ENCODE measurements at regions of chr11 and their contacts with region 1.

Region 1: GRCh38 chr11:44911029-44911814 is 39.5 kb downstream of the TP53I11 start:
- DNase-seq: peak; percentile 84
- H3K4me3 Mint-ChIP-seq: no peak overlapping the region
- H3K27ac Mint-ChIP-seq: no peak overlapping the region
- H3K4me1 Mint-ChIP-seq: peaks cover 4% of the 10 kb centered on the region
- H3K27me3 Mint-ChIP-seq: no peaks in the 10 kb centered on the region

Region 2: DNA sequence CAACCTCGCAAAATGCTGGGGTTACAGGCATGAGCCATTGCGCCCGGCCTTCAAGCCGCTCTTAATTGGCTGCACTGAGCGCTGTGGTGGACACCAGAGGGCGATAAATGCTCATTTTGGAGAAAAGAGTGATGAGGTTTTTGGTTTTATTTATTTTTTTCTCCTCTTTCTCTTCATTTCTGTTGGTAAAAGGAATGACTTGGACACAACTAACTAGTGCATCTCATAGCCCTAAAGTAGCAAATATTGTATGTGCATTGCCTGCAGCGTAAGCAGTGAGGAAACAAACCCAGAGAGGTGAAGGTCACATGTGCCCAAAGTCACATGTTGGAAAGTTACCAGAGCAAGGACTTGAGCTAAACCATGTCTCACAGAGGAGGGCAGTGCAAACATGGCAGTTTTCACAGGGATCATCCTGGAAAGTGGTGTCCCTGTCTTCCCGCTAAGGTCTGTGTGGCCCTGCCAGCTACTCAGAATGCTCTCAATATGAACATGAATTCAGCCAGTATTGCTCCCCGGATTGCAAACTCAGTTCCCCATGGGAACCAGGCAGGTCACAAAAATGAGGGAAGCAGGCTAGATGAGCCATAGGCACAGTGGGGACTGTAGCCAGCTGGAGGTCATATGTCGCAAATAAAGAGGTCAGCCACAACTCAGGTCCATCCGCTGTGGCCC is 354.4 kb before region 1 on chr11:
- CTCF ChIA-PET with region 1: interaction called, 15 read pairs
- POLR2A ChIA-PET with region 1: no interaction called
- DNase-seq: peak; percentile 74
- H3K4me3 Mint-ChIP-seq: no peak overlapping the region
- H3K27ac Mint-ChIP-seq: peak overlapping the region; percentile 31
- H3K4me1 Mint-ChIP-seq: peaks cover 34% of the 10 kb centered on the region
- H3K27me3 Mint-ChIP-seq: peaks cover 4% of the 10 kb centered on the region

Region 3: GRCh38 chr11:44658506-44658850 is 252.7 kb before region 1 on chr11:
- CTCF ChIA-PET with region 1: interaction called, 11 read pairs
- POLR2A ChIA-PET with region 1: no interaction called
- DNase-seq: peak; percentile 59
- H3K4me3 Mint-ChIP-seq: no peak overlapping the region
- H3K27ac Mint-ChIP-seq: peak overlapping the region; percentile 45
- H3K4me1 Mint-ChIP-seq: peaks cover 33% of the 10 kb centered on the region
- H3K27me3 Mint-ChIP-seq: peaks cover 11% of the 10 kb centered on the region

Region 4: DNA sequence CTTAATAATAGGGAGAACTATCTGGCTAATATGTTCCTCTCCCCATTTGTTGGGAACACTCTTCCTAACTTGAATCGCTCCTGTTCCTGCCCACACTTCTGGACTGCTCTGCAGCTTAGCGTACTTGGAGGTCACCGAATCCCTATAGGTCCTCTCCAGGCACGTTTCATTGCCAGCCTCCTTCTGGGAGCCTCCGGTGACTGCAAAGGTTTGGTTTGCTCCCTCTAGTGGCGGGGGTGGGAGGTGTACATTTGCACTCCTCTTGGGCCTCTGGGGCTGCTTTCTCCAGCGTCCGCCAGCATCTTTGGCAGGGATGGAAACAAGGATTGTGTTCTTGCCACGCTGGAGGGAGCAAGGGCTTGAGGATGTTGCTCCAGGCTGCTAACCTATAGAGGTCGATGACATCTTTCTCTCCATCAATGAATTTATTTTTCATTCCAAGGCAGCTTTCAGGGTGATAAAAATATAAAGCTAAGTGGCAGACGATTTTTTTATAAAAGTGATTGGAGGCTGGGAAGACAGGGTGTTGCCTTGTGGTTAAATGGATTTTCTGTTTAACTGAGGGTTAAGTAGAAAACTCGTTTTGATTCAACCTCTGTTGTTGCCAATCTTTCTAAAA is 135.7 kb before region 1 on chr11:
- CTCF ChIA-PET with region 1: interaction called, 16 read pairs
- POLR2A ChIA-PET with region 1: no interaction called
- DNase-seq: peak; percentile 61
- H3K4me3 Mint-ChIP-seq: no peak overlapping the region
- H3K27ac Mint-ChIP-seq: no peak overlapping the region
- H3K4me1 Mint-ChIP-seq: no peaks in the 10 kb centered on the region
- H3K27me3 Mint-ChIP-seq: peaks cover 2% of the 10 kb centered on the region

Region 5: GRCh38 chr11:44901120-44901633 is 10.0 kb before region 1 on chr11:
- CTCF ChIA-PET with region 1: interaction called, 14 read pairs
- POLR2A ChIA-PET with region 1: interaction called, 3 read pairs
- DNase-seq: no peak
- H3K4me3 Mint-ChIP-seq: no peak overlapping the region
- H3K27ac Mint-ChIP-seq: no peak overlapping the region
- H3K4me1 Mint-ChIP-seq: no peaks in the 10 kb centered on the region
- H3K27me3 Mint-ChIP-seq: no peaks in the 10 kb centered on the region

Region 6: DNA sequence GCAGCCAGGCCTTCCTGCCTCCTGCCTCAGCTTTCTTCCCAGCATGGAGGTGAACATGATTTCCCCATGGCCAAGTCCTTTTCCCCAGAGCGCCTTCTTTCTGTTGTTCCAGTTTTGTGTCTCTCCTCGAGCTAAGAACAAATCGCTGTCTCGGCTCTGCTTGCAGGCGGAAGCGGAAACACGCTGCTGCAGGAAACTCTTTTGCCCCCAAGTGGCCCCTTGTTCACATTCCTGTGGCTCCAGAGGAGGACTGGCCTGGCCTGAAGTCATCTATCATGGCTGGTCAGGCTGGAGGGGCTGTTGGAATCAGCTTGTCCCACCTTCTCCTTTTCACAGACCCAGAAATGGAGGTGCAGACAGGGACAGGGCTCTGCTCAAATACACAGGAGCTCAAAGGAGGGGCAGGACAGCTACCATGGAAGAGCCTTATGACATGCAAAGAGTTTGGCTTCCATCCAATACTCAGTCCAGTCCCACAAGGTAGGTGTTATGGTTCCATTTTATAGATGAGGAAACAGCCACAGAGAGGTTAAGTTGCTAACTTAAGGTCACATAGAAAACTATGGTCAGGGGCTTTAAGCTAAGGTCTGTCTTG is 557.1 kb after region 1 on chr11:
- CTCF ChIA-PET with region 1: no interaction called
- POLR2A ChIA-PET with region 1: no interaction called
- DNase-seq: no peak
- H3K4me3 Mint-ChIP-seq: no peak overlapping the region
- H3K27ac Mint-ChIP-seq: no peak overlapping the region
- H3K4me1 Mint-ChIP-seq: no peaks in the 10 kb centered on the region
- H3K27me3 Mint-ChIP-seq: peaks cover 3% of the 10 kb centered on the region

Measured in activated CD4-positive, alpha-beta memory T cell treated with anti-CD3 and anti-CD28 coated beads, Interleukin-2, amount 10 ng/mL, durations not matched to agents 7 days and 5 days (primary cell).